ENCODE measurements at regions of chr11 and their contacts with region 1.

Region 1: GRCh38 chr11:33490842-33491370 is 209.7 kb downstream of the C11orf91 start:
- DNase-seq: peak; percentile 45
- H3K4me3 ChIP-seq: no peak overlapping the region
- H3K27ac ChIP-seq: no peak overlapping the region
- H3K4me1 ChIP-seq: no peaks in the 10 kb centered on the region
- H3K27me3 ChIP-seq: no peaks in the 10 kb centered on the region
- CTCF ChIP-seq: no peak

Region 2: GRCh38 chr11:33419924-33420323 is 71.0 kb before region 1 on chr11:
- CTCF ChIA-PET with region 1: no interaction called
- dilution Hi-C with region 1: loop called (anchors 5 kb)
- in situ Hi-C with region 1: no loop called
- intact Hi-C with region 1: no loop called
- DNase-seq: no peak
- H3K4me3 ChIP-seq: no peak overlapping the region
- H3K27ac ChIP-seq: no peak overlapping the region
- H3K4me1 ChIP-seq: no peaks in the 10 kb centered on the region
- H3K27me3 ChIP-seq: no peaks in the 10 kb centered on the region
- CTCF ChIP-seq: no peak

Region 3: DNA sequence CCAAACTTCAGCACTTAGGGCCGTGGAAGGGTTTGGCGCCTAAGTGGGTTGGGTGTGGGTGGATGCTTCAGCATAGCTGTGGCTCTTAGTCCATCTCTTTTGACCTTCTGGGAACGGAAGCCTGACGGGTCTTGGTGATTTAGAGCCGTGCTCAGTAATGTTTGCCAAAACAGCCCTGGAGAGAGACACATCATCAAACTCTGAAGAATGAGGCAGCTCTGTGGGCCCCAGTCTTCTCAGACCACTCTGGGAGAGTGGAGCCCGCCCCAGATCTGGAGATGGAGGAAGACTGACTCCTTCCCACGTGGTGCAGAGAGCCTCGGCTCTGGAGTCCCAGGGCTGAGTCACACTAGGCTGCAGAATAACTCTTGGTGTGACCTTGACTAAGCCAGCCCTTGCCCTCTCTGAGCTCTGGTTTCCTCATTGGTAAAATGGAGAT is 40.9 kb after region 1 on chr11:
- CTCF ChIA-PET with region 1: no interaction called
- dilution Hi-C with region 1: no loop called
- in situ Hi-C with region 1: no loop called
- intact Hi-C with region 1: no loop called
- DNase-seq: no peak
- H3K4me3 ChIP-seq: no peak overlapping the region
- H3K27ac ChIP-seq: no peak overlapping the region
- H3K4me1 ChIP-seq: no peaks in the 10 kb centered on the region
- H3K27me3 ChIP-seq: no peaks in the 10 kb centered on the region
- CTCF ChIP-seq: no peak

Measured in mammary epithelial cell (primary cell).